ENCODE measurements at regions of chr12 and their contacts with region 1.

Region 1: DNA sequence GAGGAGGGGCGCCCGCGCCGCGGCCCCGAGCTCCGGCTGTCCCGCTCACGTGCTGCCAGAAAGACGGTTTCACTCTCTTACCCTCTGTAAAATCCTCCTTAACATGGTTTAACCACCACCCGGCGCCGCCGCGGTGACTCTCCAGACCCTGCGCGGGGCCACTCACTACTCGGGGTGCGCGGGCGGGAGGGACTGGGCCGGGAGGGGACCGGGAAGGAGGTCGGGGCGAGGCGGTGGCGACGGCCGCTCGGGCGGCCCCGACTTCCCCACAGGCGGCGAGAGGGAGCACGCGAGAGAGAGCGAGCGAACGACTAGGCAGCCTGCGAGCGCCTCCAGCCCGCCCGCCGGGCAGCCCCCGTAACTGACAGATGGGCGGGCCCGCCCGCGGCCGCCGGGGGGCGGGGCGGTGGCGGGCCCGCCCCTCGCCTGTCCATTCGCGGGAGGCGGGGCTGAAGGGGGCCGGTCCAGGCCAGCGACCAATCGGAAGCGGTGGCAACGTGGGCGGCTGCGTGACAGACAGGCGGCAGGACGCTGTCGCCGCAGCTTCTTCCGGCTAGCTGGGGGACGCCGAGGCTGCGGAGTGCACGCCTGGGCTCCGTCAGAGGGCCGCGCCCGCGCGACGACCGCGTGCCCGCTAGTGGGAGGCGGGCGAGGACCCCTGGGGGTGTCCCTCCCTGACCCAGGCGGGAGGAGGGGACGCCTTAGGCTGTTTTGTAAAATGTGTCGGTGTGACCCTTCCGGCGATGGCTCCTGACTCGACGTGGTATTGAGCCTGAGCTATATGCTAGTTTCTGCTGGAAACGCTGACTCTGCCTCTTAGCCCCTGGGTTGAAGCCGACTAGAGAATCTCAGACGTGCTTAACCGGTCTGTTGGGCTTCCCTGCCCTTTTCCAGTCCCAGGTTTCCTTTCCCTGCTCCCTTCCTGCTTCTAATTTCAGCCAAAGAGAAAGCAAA is at the start of gene EEA1:
- DNase-seq: peak; percentile 95
- ATAC-seq: peak; percentile 89
- H3K4me3 Mint-ChIP-seq: peak within 1 kb of the TSS; percentile 91
- H3K27ac Mint-ChIP-seq: peak within 1 kb of the TSS; percentile 97
- H3K4me1 Mint-ChIP-seq: peaks cover 27% of the 10 kb centered on the region
- H3K27me3 Mint-ChIP-seq: no peaks in the 10 kb centered on the region
- total RNA-seq, gene EEA1: 15.4 to 16.0 TPM

Region 2: DNA sequence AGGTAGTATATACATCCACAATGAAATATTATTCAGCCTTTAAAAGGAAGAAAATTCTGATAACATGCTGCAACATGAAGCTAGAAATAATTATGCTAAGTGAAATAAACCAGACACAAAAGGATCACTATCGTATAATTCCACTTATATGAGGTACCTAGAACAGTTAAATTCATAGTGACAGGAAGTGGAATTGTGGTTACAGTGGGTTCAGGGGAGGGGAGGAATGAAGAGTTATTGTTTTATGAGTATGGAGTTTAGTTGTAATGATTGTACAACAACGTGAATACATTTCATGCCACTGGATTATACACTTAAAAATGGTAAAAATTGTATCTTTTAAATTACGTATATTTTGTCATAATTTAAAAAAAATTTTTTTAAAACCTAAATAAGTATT is 21.1 kb before region 1 on chr12:
- POLR2A ChIA-PET with region 1: interaction called, 18 read pairs
- DNase-seq: no peak
- ATAC-seq: peak; percentile 93
- H3K4me3 Mint-ChIP-seq: peak overlapping the region; percentile 63
- H3K27ac Mint-ChIP-seq: peak overlapping the region; percentile 36
- H3K4me1 Mint-ChIP-seq: peaks cover 33% of the 10 kb centered on the region
- H3K27me3 Mint-ChIP-seq: no peaks in the 10 kb centered on the region

Region 3: DNA sequence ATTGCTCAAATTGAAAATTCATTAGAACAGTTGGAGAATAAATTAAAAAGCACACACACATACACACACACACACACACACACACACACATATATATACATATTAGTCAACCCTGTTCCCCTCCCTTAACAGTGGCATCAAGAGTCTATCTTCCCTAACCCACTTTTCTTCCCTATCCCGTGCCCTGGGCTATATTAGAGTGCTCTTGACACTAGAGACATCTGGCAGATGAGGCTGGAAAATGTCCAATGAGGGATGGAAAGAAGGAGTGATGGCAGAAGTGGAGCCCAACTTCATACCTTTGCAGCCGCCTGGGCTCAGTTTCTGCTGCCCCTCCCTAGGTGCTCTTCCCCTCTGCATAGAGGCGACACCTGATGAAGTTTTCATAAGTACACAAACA is 276.1 kb after region 1 on chr12:
- POLR2A ChIA-PET with region 1: no interaction called
- DNase-seq: no peak
- ATAC-seq: no peak
- H3K4me3 Mint-ChIP-seq: no peak overlapping the region
- H3K27ac Mint-ChIP-seq: no peak overlapping the region
- H3K4me1 Mint-ChIP-seq: peaks cover 2% of the 10 kb centered on the region
- H3K27me3 Mint-ChIP-seq: peaks cover 7% of the 10 kb centered on the region

Measured in activated naive CD8-positive, alpha-beta T cell treated with anti-CD3 and anti-CD28 coated beads, Interleukin-2, amount 10 ng/mL, durations not matched to agents 7 days and 5 days (primary cell).